HepG2 (cell line): ENCODE measurements at regions of chr4 and their contacts with region 1.

Region 1: GRCh38 chr4:162865102-162865501 is 301.6 kb downstream of the NAF1 start:
- DNase-seq: no peak
- ATAC-seq: peak; percentile 46; the same call in 1 of the 3 replicates
- H3K4me3 ChIP-seq: no peak overlapping the region
- H3K27ac ChIP-seq: no peak overlapping the region
- H3K4me1 ChIP-seq: no peaks in the 10 kb centered on the region
- H3K27me3 ChIP-seq: no peaks in the 10 kb centered on the region
- CTCF ChIP-seq: peak; percentile 34
- EP300 ChIP-seq: no peak
- POLR2A ChIP-seq: no peak
- RAD21 ChIP-seq: no peak

Region 2: DNA sequence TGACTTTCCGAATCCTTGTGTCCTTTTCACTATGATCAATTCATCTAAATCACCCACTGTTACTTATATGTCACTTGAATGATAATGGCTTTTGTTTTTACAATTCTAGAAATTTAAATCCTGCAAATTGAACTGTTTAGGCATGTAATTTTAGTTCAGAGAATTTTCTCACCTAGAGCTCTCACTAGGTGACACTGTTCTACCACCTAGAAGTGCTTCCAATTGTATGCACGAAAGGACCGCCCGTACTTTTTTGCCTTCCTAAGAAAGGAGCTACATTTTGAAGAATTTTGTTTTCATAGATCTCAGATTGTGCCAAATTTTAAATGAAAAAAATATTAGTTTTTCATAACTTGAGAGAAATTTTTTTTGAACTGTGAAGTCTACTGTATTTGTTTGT is 219.7 kb before region 1 on chr4:
- CTCF ChIA-PET with region 1: no interaction called
- POLR2A ChIA-PET with region 1: no interaction called
- in situ Hi-C with region 1: no loop called
- intact Hi-C with region 1: loop called (anchors 5 kb)
- DNase-seq: peak; percentile 4
- ATAC-seq: no peak
- H3K4me3 ChIP-seq: no peak overlapping the region
- H3K27ac ChIP-seq: no peak overlapping the region
- H3K4me1 ChIP-seq: no peaks in the 10 kb centered on the region
- H3K27me3 ChIP-seq: no peaks in the 10 kb centered on the region
- CTCF ChIP-seq: peak; percentile 35
- EP300 ChIP-seq: no peak
- POLR2A ChIP-seq: no peak
- RAD21 ChIP-seq: 0 out of 2 replicates have a peak, but pooled peaks have one; percentile 35